Activated naive CD8-positive, alpha-beta T cell treated with anti-CD3 and anti-CD28 coated beads, Interleukin-2, amount 10 ng/mL, durations not matched to agents 7 days and 5 days (primary cell): ENCODE measurements at regions of chr17 and their contacts with region 1.

Region 1: DNA sequence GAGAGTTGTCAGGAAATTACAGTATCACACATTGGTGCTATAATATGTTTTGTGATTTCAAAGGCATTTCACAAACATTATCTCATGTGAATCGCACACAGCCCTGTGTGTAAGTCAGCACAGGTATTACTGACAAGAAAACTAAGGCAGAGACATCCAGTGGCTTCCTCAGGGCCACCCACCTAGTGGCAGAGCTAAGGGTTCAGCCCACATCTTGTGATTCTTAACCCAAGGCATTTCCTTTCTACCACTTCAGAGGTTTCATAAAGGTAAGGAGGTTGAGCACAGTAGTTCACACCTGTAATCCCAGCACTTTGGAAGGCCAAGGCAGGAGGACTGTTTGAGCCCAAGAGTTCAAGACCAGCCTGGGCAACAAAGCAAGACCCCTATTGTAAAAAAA is 58.2 kb downstream of the STX8 start:
- DNase-seq: no peak
- ATAC-seq: peak; percentile 97
- H3K4me3 Mint-ChIP-seq: no peak overlapping the region
- H3K27ac Mint-ChIP-seq: no peak overlapping the region
- H3K4me1 Mint-ChIP-seq: peaks cover 18% of the 10 kb centered on the region
- H3K27me3 Mint-ChIP-seq: peaks cover 2% of the 10 kb centered on the region

Region 2: DNA sequence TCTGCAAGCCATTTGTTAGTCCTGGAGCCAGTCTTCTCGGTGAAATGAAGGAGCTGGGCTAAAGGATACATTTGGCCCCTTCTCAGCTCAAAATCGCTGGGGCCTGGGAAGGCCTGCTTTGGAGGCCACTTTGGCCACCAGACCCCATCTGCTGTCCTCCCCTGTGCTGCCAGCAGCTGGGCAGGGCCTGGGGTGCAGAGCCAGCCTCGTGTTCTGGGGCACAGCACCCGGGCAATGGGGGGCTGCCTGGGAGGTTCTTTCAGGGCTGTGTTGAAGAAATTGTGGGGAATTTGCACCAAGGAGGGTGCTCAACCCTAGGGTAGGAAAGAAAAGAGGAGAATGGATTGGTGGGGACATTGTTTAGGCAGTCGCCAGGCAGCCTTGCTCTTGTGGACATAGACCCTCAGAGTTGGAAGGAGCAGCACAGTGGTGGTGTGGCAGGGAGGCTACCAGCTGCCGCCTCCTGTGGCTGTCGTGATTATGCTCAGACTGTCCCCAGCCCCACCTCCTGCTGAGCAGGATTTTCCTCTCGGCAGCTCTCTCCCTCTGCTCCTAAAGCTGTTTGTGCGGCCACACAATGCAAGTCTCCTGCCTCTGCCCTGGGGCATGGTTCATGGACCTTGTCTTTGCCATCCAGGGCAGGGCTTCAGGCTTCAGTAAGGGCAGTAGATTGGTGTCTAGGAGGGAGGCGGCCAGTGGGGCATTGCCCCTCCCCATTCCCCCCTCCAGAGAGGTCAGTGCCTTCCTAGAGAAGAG is 321.3 kb before region 1 on chr17:
- POLR2A ChIA-PET with region 1: interaction called, 10 read pairs
- DNase-seq: no peak
- ATAC-seq: no peak
- H3K4me3 Mint-ChIP-seq: no peak overlapping the region
- H3K27ac Mint-ChIP-seq: no peak overlapping the region
- H3K4me1 Mint-ChIP-seq: peaks cover 1% of the 10 kb centered on the region
- H3K27me3 Mint-ChIP-seq: peaks cover 6% of the 10 kb centered on the region

Region 3: DNA sequence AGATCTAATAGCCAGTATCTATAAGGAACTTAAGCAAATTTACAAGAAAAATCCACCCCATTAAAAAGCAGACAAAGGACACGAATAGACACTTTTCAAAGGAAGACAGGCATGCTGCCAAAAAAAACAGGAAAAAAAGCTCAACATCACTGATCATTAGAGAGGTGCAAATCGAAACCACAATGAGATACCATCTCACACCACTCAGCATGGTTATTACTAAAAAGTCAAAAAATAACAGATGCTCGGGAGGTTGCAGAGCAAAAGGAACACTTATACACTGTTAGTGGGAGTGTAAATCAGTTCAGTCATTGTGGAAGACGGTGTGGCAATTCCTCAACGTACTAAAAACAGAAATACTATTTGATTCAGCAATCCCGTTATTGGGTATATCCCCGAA is 48.7 kb after region 1 on chr17:
- POLR2A ChIA-PET with region 1: no interaction called
- DNase-seq: no peak
- ATAC-seq: no peak
- H3K4me3 Mint-ChIP-seq: no peak overlapping the region
- H3K27ac Mint-ChIP-seq: no peak overlapping the region
- H3K4me1 Mint-ChIP-seq: peaks cover 17% of the 10 kb centered on the region
- H3K27me3 Mint-ChIP-seq: no peaks in the 10 kb centered on the region